ENCODE measurements at regions of chr3 and their contacts with region 1.

Region 1: DNA sequence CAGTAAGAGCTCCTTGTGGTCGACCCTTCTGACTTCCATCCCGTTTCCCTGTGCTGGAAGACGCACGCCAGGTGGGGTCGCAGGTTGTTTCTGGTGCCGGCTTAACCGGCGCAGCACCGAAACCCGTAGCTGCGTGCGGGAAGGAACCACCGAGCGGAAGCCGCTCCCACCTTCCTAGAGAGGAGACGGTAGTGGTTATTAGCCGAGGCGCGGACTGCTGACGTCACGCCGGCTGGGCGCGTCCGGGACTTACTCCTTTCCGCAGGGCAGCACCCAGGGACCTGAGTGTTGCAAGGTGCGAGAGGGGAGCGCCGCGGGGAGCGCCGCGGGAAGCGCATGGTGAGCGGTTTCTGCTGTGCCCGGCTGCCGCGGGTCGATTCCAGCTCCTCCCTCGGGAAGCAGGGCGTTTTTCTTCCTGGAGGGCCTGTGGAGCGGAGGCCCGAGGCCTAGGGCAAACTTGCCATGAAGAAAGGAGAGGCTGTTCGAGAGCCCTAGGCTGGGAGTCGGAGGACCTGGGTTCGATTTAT is at the start of gene ZNF501:
- DNase-seq: peak; percentile 26
- H3K4me3 ChIP-seq: peak within 1 kb of the TSS; percentile 55
- H3K27me3 ChIP-seq: no peaks in the 10 kb centered on the region
- CTCF ChIP-seq: no peak
- polyA plus RNA-seq, gene ZNF501: 3.7 and 4.8 TPM in 2 replicates

Region 2: DNA sequence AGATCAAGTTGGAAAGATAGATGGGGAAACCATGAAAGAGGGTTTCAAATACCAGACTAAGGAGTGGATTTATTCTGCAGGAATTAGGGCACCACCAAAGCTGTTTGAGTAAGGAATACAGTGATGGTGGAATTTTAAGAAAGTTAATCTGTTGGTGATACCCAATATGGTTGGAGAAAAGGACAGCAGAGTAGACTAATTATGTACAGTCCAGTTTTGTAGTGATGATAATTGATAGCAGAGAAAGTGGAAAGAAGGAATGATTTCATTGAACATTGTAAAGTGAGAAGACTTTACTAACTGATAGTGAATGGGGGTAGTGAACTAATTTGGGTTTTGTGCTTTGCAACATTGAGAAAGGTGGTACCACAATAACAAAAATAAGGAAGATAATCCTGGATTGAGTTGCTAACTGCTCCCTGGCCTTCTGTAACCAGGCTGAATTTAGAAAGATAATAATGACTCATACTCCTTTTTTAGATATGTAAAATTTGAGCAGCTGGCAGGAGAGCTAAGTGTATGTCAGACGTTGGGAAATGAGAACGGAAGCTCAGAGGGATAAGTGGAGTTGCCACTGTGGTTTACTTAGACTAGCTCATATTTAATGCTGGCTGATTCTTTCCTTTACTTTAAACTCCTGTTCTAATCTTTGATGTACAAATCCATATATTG is 373.9 kb before region 1 on chr3:
- CTCF ChIA-PET with region 1: no interaction called
- POLR2A ChIA-PET with region 1: no interaction called
- DNase-seq: no peak
- H3K4me3 ChIP-seq: no peak overlapping the region
- H3K27me3 ChIP-seq: no peaks in the 10 kb centered on the region
- CTCF ChIP-seq: no peak

Region 3: DNA sequence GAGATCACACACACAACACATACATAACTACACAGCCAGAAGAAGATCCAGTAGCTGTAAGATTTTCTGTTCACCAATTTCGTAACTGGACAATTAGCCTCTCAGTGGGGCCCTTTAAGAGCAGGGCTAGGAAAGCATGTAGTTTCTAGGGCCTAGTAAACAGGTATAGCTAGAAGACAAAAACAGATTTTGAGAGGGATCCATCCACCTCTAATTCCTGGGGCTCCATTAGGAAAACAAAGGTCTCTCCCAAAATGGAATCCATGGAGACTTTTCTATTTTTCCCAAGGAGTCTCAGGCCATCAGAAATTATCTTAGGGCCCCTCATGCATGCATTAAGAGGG is 42.6 kb after region 1 on chr3:
- CTCF ChIA-PET with region 1: no interaction called
- POLR2A ChIA-PET with region 1: interaction called, 12 read pairs
- DNase-seq: no peak
- H3K4me3 ChIP-seq: no peak overlapping the region
- H3K27me3 ChIP-seq: no peaks in the 10 kb centered on the region
- CTCF ChIP-seq: no peak

Measured in BJ (cell line).